Prostate gland (tissue), 2 donors: ENCODE measurements at regions of chr15 and their contacts with region 1.

Region 1: DNA sequence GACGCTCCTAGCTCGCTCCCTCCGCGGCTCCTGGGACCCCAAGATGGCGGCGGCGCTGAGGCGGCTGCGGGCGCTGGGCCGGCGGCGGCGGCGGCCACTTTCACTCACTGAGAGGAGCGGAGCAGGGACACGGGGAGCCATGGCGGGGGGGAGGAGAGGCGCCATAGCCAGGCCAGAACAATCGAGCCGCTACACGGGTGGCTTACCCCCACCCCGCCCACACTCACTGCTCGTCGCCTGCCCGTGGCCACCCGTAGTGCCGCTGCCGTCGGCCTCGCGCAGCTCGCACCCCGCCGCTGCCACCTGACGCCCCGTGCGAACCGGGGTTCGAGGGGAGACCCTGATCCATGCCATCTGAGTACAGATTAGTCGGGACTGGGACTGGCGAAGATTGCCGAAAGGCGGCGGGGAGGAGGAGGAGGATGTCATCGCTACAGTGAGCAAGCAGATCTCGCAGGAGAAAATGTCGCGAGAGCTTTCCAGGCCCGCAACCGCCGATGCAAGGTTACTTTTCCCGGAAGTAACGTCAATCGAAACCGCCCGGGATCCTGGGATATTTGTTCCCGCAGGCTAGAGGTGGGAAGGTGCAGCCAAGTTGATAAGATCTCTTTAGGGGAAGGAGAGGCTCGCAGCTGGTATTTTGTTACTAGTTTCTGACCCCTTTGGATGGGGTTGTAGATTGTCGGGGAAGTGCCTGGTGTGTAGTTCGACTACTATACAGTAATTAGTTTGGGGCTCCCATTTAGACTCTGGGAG is at the start of gene INO80:
- DNase-seq: peak; percentile 98
- H3K4me3 ChIP-seq: peak within 1 kb of the TSS; percentile 96 to 98
- H3K27ac ChIP-seq: peak within 1 kb of the TSS; percentile 100
- H3K4me1 ChIP-seq: no peaks in the 10 kb centered on the region
- H3K27me3 ChIP-seq: no peaks in the 10 kb centered on the region
- CTCF ChIP-seq: peak in 1 of 4 experiments; percentile 17
- POLR2A ChIP-seq: peak; percentile 14
- total RNA-seq, gene INO80: 23.0 to 51.2 TPM

Region 2: GRCh38 chr15:41230650-41231533 is 114.6 kb after region 1 on chr15 and contains the starts of genes CHP1 and EXD1:
- intact Hi-C with region 1: loop called (anchors 5 kb)
- DNase-seq: peak; percentile 98
- H3K4me3 ChIP-seq: peak within 1 kb of the TSS; percentile 48 to 88
- H3K27ac ChIP-seq: peak within 1 kb of the TSS; percentile 85 to 97
- H3K4me1 ChIP-seq: no peaks in the 10 kb centered on the region
- H3K27me3 ChIP-seq: no peaks in the 10 kb centered on the region
- CTCF ChIP-seq: peak; percentile 59 to 96 (median 91)
- POLR2A ChIP-seq: peak; percentile 76
- total RNA-seq, gene CHP1: 97.0 to 174 TPM
- total RNA-seq, gene EXD1: 5.3 TPM in 1 of 2 donors, not detected in the other